GM10248 (cell line): ENCODE measurements at regions of chr10 and their contacts with region 1.

Region 1: GRCh38 chr10:17353559-17354300 is 100.7 kb downstream of the ST8SIA6 start:
- DNase-seq: no peak
- CTCF ChIP-seq: no peak

Region 2: GRCh38 chr10:17368708-17369272 is 15.1 kb after region 1 on chr10:
- CTCF ChIA-PET with region 1: interaction called, 14 read pairs
- POLR2A ChIA-PET with region 1: no interaction called
- DNase-seq: no peak
- CTCF ChIP-seq: no peak

Region 3: DNA sequence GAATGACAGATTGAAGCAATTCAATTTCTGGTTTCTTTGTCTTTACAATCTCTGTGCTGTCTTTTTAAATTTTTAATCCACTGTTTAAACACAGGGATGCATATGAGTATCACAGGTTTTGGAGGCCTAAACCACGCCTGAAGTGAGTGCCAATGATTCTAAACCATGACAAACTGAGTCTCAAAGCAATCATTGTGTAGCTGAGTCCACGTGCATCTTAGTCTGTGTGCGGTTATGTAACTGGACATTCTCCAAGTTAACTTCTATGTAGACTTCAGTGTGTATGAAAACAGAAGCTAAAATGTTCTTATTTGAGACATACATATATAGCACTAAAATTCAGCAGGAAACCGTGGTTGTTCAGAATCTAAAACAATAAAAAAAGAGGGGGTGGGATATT is 180.0 kb after region 1 on chr10:
- CTCF ChIA-PET with region 1: no interaction called
- POLR2A ChIA-PET with region 1: no interaction called
- DNase-seq: no peak
- CTCF ChIP-seq: no peak